ENCODE measurements at regions of chrX and their contacts with region 1.

Region 1: DNA sequence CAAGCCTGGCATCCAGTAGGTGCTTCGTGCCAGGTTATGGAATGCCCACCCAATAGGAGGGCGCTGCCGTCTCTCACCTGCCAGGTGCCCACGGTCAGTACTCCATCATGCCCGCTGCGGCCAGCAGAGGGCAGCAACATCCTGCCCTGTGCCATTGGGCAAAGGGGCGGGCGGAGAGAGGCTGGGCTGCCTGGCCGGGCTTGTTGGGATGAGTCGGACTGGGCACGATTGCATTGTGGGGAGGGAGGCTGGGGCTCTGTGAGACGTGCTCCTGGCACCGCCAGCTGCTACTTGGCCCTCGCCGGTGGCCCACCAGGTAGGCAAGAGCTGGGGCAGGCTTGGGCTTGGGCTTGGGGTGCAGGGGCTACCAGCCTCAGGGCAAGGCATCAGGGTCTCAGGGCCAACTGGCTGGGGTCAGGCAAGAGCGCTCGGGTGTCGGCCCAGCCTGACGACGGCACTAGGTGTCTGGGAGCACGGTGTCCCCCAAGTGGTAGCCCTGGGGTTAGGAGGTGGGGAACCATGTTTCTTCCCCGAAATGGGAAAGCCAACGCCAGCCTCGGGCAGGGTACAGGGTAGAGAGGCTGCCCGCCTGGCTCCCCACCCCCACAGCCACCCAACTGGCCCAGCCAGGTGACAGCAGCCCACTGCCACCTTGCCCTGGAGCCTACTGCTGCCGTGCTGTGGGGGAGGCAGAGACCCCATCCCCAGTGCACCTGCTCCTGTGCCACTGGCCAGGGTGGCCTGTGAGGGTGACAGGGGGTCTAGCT is at the start of gene PLXNB3:
- DNase-seq: peak; percentile 49 to 64 (median 58)
- ATAC-seq: peak; percentile 18; the same call in 2 of the 3 replicates
- H3K4me3 ChIP-seq: peak within 1 kb of the TSS; percentile 51
- H3K27ac ChIP-seq: peak within 1 kb of the TSS; percentile 99
- H3K4me1 ChIP-seq: peaks cover 15 to 66% of the 10 kb centered on the region in 2 experiments
- H3K27me3 ChIP-seq: no peaks in the 10 kb centered on the region
- CTCF ChIP-seq: peak; percentile 70 to 81 (median 75)
- EP300 ChIP-seq: no peak
- POLR2A ChIP-seq: no peak
- RAD21 ChIP-seq: peak; percentile 60 to 80
- polyA plus RNA-seq, gene PLXNB3: not detected

Region 2: GRCh38 chrX:153635788-153636622 is 128.2 kb before region 1 on chrX:
- CTCF ChIA-PET with region 1: no interaction called
- POLR2A ChIA-PET with region 1: no interaction called
- in situ Hi-C with region 1: no loop called
- intact Hi-C with region 1: no loop called
- DNase-seq: peak in 3 of 4 experiments; percentile 38 to 48 (median 47)
- ATAC-seq: peak; percentile 78
- H3K4me3 ChIP-seq: no peak overlapping the region
- H3K27ac ChIP-seq: no peak overlapping the region
- H3K4me1 ChIP-seq: peaks cover 0 to 31% of the 10 kb centered on the region in 2 experiments; a peak in 2 of 5 replicates
- H3K27me3 ChIP-seq: peaks cover 7 to 67% of the 10 kb centered on the region in 2 experiments; a peak in 4 of 5 replicates
- CTCF ChIP-seq: peak; percentile 50 to 75 (median 62)
- EP300 ChIP-seq: no peak
- POLR2A ChIP-seq: no peak
- RAD21 ChIP-seq: no peak

Region 3: DNA sequence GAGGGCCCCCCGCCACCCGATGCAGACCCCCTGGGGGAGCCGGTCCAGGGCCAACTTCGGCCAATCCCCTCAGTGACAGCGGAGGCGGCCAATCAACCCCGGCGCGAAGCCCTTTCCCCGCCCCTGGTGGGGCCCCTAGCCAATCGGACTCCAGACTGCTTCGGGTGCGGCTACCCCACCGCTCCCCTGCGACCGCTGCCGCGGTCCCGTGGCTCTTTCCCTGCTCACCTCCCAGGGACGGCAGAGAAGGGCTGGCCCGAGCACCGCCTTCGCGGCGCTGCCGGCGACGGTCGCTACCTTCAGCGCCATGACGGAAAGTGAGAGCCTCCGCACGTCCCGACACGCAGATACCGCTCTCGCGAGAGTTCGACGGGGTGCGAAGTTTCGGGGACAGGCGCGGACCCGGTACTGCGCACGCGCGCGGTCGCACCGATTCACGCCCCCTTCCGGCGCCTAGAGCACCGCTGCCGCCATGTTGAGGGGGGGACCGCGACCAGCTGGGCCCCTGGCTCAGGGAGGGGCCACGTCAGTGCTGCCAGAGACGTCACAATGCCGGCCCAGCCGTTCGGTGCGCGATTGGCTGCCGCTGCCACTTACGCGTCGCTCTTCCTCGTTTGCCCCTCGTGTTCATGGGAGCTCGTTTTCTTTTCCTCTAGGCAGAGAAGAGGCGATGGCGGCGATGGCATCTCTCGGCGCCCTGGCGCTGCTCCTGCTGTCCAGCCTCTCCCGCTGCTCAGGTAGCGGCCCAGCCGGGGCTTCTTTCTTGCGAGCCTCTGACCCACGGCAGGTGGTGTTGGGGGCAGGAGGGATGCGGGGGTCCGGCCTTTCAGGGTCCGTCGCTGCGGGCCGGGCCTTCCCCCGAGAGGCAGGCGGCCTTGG is 30.1 kb after region 1 on chrX and contains the starts of genes IDH3G and SSR4:
- CTCF ChIA-PET with region 1: no interaction called
- POLR2A ChIA-PET with region 1: no interaction called
- in situ Hi-C with region 1: no loop called
- intact Hi-C with region 1: loop called (anchors 2 kb)
- DNase-seq: peak; percentile 95 to 98 (median 96)
- ATAC-seq: peak; percentile 92
- H3K4me3 ChIP-seq: peak within 1 kb of the TSS; percentile 78
- H3K27ac ChIP-seq: peak within 1 kb of the TSS; percentile 96
- H3K4me1 ChIP-seq: peaks cover 33 to 73% of the 10 kb centered on the region in 2 experiments
- H3K27me3 ChIP-seq: no peaks in the 10 kb centered on the region
- CTCF ChIP-seq: peak in 2 of 3 experiments; percentile 31 to 38; a peak in 3 of 6 replicates
- EP300 ChIP-seq: no peak
- POLR2A ChIP-seq: peak; percentile 85
- RAD21 ChIP-seq: 0 out of 4 replicates have a peak, but pooled peaks of 1 of the 2 experiments have one; percentile 8
- polyA plus RNA-seq, gene IDH3G: 24.3 to 36.4 TPM
- polyA plus RNA-seq, gene SSR4: 469 to 492 TPM

Region 4: DNA sequence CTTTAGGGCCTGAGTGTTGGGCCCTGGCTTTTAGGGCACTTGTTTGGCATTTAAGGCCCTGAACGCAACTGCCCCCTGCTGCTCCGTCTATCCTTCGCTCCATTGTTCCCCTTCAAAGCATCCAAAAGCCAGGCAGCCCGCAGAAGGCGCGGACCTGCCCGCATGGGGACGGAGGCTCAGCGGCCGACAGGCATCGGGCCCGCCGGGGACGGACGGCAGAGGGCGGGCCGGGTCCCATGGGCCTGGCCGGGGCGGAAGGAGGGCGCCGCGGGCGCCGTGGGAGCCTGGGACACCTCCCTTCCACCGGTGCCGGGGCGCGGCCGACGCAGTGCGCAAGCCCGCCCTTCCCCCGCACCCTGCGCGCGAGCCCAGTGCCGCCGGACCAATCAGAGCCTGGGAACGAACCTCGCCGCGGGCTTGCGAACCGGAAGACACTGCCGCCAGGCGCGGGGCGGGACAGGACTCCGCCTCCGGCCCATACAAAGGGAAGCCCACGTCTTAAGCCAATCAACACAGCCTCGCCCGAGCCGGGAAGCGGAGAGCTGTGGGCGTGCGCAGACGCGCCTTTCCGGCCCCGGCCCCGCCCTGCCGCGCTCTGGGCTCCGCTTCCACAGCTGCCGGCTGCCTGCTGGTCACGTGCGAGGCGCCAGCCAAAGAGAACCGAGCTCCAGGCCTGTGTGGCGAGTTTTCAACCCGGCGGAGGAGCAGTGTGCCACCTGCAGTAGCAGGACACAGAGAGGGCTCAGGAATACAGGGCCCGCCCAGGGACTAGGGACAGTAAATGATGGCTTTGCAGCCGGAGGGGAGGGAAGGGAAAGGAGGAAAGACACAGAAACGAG is 164.0 kb after region 1 on chrX:
- CTCF ChIA-PET with region 1: no interaction called
- POLR2A ChIA-PET with region 1: interaction called, 3 read pairs
- in situ Hi-C with region 1: no loop called
- intact Hi-C with region 1: loop called (anchors 5 kb)
- DNase-seq: peak; percentile 85 to 97 (median 90)
- ATAC-seq: peak; percentile 90
- H3K4me3 ChIP-seq: peak overlapping the region; percentile 58
- H3K27ac ChIP-seq: peak overlapping the region; percentile 98
- H3K4me1 ChIP-seq: peaks cover 29 to 66% of the 10 kb centered on the region in 2 experiments; a peak in 4 of 5 replicates
- H3K27me3 ChIP-seq: no peaks in the 10 kb centered on the region
- CTCF ChIP-seq: peak in 2 of 3 experiments; percentile 33 to 38; a peak in 4 of 6 replicates
- EP300 ChIP-seq: no peak
- POLR2A ChIP-seq: peak; percentile 69
- RAD21 ChIP-seq: peak; percentile 14 to 25; a peak in 2 of 4 replicates

Region 5: GRCh38 chrX:153947009-153947769 is 183.0 kb after region 1 on chrX:
- CTCF ChIA-PET with region 1: interaction called, 7 read pairs
- POLR2A ChIA-PET with region 1: interaction called, 4 read pairs
- in situ Hi-C with region 1: no loop called
- intact Hi-C with region 1: loop called (anchors 2 kb)
- DNase-seq: peak; percentile 62 to 90 (median 72)
- ATAC-seq: peak; percentile 92
- H3K4me3 ChIP-seq: no peak overlapping the region
- H3K27ac ChIP-seq: peak overlapping the region; percentile 53; the same call in 2 of the 3 replicates
- H3K4me1 ChIP-seq: peaks cover 8 to 80% of the 10 kb centered on the region in 2 experiments; a peak in 4 of 5 replicates
- H3K27me3 ChIP-seq: no peaks in the 10 kb centered on the region
- CTCF ChIP-seq: peak; percentile 97 to 99 (median 99)
- EP300 ChIP-seq: no peak
- POLR2A ChIP-seq: peak; percentile 56; the same call in 1 of the 2 replicates
- RAD21 ChIP-seq: peak; percentile 74

Measured in K562 (cell line).